ENCODE measurements at regions of chr1 and their contacts with region 1.

Region 1: DNA sequence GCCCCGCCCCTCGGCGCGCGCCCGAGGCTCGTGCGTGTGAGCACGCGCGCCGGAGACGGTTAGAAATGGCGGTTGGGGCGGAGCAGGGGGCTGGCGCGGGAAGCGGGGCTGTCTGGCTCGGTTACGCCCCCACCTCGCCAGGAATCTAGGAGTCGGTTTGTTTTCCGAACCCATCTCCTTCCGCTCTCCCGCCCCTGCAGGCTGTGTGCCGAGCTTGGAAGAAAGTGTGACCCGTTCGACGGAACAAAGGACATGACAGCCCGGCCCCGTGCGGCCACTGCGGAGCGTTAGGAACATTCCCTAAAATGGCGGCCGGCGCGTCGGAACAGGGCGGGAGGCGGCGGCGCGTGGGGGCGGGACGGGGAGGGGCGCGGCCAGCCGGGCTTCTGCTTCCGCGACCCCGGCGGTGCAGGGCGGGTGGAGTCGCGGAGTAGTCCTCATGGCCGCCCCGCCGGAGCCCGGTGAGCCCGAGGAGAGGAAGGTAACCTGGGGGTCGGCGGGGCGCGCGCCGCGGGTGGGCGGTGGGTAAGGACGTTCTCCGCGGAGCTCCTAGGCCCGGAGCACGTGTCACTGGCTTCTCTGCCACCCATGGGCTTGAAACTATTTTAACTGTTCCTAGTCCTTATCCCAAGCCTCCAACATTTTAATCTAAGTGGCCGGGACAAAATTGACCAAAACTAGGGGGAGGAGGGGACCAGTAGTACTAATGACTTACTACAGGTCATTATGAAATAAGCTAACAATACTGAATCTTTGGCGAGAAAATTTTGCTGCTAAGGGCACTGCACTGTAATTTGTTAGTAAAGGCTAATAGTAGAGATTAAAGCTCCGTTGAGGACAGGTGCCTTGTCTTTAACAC is at the start of gene COX20:
- DNase-seq: peak; percentile 84 to 97 (median 93)
- ATAC-seq: peak; percentile 84
- H3K4me3 ChIP-seq: peak within 1 kb of the TSS; percentile 87
- H3K4me3 Mint-ChIP-seq: peak within 1 kb of the TSS; percentile 85 to 100 (median 97)
- H3K27ac ChIP-seq: peak within 1 kb of the TSS; percentile 96
- H3K27ac Mint-ChIP-seq: peak within 1 kb of the TSS; percentile 99 to 100 (median 100)
- H3K4me1 ChIP-seq: peaks cover 17 to 27% of the 10 kb centered on the region in 2 donors
- H3K4me1 Mint-ChIP-seq: peaks cover 34 to 55% (median 48%) of the 10 kb centered on the region in 7 donors
- H3K27me3 ChIP-seq: no peaks in the 10 kb centered on the region
- H3K27me3 Mint-ChIP-seq: no peaks in the 10 kb centered on the region
- total RNA-seq, gene COX20: 23.5 to 31.0 (median 27.8) TPM

Region 2: GRCh38 chr1:244461245-244462071 is 374.0 kb before region 1 on chr1 and contains the start of gene CATSPERE:
- CTCF ChIA-PET with region 1: no interaction called
- POLR2A ChIA-PET with region 1: interaction called, 16 read pairs
- intact Hi-C with region 1: loop called in 1 of 2 experiments (anchors 1 kb)
- DNase-seq: peak; percentile 55 to 79 (median 76)
- ATAC-seq: peak; percentile 99
- H3K4me3 ChIP-seq: peak within 1 kb of the TSS; percentile 77
- H3K4me3 Mint-ChIP-seq: peak within 1 kb of the TSS; percentile 69 to 89 (median 82)
- H3K27ac ChIP-seq: peak within 1 kb of the TSS; percentile 78
- H3K27ac Mint-ChIP-seq: peak within 1 kb of the TSS; percentile 78 to 97 (median 90)
- H3K4me1 ChIP-seq: peaks cover 5 to 6% of the 10 kb centered on the region in 2 donors
- H3K4me1 Mint-ChIP-seq: peaks cover 6 to 16% (median 13%) of the 10 kb centered on the region in 7 donors
- H3K27me3 ChIP-seq: no peaks in the 10 kb centered on the region
- H3K27me3 Mint-ChIP-seq: peaks cover 0 to 2% (median 0%) of the 10 kb centered on the region in 5 donors
- total RNA-seq, gene CATSPERE: 0.77 to 2.2 (median 1.7) TPM

Region 3: GRCh38 chr1:244849189-244849866 is 13.8 kb after region 1 on chr1:
- CTCF ChIA-PET with region 1: interaction called, 10 read pairs
- POLR2A ChIA-PET with region 1: interaction called, 1,419 read pairs
- intact Hi-C with region 1: loop called (anchors 1 kb)
- DNase-seq: no peak
- ATAC-seq: no peak
- H3K4me3 ChIP-seq: no peak overlapping the region
- H3K4me3 Mint-ChIP-seq: peak overlapping the region in 1 of 10 donors; percentile 21
- H3K27ac ChIP-seq: no peak overlapping the region
- H3K27ac Mint-ChIP-seq: peak overlapping the region in 6 of 9 donors; percentile 18 to 64 (median 48)
- H3K4me1 ChIP-seq: peaks cover 16 to 22% of the 10 kb centered on the region in 2 donors
- H3K4me1 Mint-ChIP-seq: peaks cover 33 to 96% (median 71%) of the 10 kb centered on the region in 7 donors
- H3K27me3 ChIP-seq: no peaks in the 10 kb centered on the region
- H3K27me3 Mint-ChIP-seq: no peaks in the 10 kb centered on the region

Region 4: GRCh38 chr1:244864253-244865027 is 28.9 kb after region 1 on chr1 and contains the start of gene HNRNPU:
- CTCF ChIA-PET with region 1: interaction called, 83 read pairs
- POLR2A ChIA-PET with region 1: interaction called, 1,419 read pairs
- intact Hi-C with region 1: loop called (anchors 1 kb)
- DNase-seq: peak; percentile 93 to 99 (median 98)
- ATAC-seq: peak; percentile 81
- H3K4me3 ChIP-seq: peak within 1 kb of the TSS; percentile 78
- H3K4me3 Mint-ChIP-seq: peak within 1 kb of the TSS; percentile 86 to 98 (median 98)
- H3K27ac ChIP-seq: peak within 1 kb of the TSS; percentile 100
- H3K27ac Mint-ChIP-seq: peak within 1 kb of the TSS; percentile 93 to 100 (median 98)
- H3K4me1 ChIP-seq: peaks cover 23 to 25% of the 10 kb centered on the region in 2 donors
- H3K4me1 Mint-ChIP-seq: peaks cover 39 to 56% (median 51%) of the 10 kb centered on the region in 7 donors
- H3K27me3 ChIP-seq: no peaks in the 10 kb centered on the region
- H3K27me3 Mint-ChIP-seq: peaks cover 0 to 3% (median 0%) of the 10 kb centered on the region in 5 donors
- total RNA-seq, gene HNRNPU: 378 to 509 (median 428) TPM

Region 5: DNA sequence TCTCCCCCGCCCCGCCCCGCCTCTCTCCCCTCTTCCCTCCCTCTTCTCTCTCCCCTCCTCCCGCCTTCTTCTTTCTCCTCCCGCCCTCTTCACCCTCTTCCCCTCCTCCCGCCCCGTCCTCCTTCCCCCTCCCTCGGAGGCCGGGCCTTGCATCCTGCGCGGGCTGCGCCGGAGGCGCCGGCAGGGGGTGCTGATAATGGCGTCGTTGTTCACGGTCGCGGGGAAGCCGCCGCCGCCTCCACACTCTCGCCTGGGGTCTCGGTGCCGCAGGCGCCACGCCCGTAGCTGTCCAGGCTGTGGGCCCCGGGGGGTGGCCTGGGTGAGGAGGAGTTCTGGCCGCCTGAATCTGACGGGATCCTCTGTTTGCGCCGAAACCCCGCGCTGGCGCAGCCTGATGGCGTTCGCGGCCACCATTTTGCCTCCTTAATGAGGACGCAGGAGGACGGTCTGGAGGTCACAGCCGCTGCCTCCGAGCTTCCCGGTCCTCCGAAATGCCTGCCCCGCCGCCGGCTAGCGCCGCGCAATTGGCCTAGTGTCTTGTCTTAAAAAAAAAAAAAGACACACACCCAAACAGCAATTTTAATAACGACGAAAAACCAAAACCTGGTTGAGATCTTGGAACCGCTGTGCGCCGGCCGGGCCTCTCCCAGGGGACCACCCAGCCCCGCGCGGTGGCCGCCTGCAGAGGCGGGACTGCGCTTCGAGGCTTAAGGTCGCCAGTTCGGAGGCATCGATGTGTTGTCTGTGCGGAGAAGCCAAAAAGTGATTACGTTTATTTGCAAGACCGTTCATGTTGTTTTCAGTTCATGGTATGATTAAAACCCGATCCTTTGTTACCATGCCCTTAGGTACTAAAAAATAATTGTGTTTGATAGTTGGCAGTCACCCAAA is 135.4 kb after region 1 on chr1:
- CTCF ChIA-PET with region 1: interaction called, 6 read pairs
- POLR2A ChIA-PET with region 1: interaction called, 207 read pairs
- intact Hi-C with region 1: loop called (anchors 1 kb)
- DNase-seq: peak; percentile 91 to 97 (median 95)
- ATAC-seq: peak; percentile 88
- H3K4me3 ChIP-seq: peak overlapping the region; percentile 81
- H3K4me3 Mint-ChIP-seq: peak overlapping the region; percentile 91 to 95 (median 93)
- H3K27ac ChIP-seq: peak overlapping the region; percentile 99
- H3K27ac Mint-ChIP-seq: peak overlapping the region; percentile 97 to 100 (median 99)
- H3K4me1 ChIP-seq: peaks cover 5 to 12% of the 10 kb centered on the region in 2 donors
- H3K4me1 Mint-ChIP-seq: peaks cover 7 to 31% (median 25%) of the 10 kb centered on the region in 7 donors
- H3K27me3 ChIP-seq: no peaks in the 10 kb centered on the region
- H3K27me3 Mint-ChIP-seq: peaks cover 0 to 14% (median 0%) of the 10 kb centered on the region in 5 donors

Region 6: DNA sequence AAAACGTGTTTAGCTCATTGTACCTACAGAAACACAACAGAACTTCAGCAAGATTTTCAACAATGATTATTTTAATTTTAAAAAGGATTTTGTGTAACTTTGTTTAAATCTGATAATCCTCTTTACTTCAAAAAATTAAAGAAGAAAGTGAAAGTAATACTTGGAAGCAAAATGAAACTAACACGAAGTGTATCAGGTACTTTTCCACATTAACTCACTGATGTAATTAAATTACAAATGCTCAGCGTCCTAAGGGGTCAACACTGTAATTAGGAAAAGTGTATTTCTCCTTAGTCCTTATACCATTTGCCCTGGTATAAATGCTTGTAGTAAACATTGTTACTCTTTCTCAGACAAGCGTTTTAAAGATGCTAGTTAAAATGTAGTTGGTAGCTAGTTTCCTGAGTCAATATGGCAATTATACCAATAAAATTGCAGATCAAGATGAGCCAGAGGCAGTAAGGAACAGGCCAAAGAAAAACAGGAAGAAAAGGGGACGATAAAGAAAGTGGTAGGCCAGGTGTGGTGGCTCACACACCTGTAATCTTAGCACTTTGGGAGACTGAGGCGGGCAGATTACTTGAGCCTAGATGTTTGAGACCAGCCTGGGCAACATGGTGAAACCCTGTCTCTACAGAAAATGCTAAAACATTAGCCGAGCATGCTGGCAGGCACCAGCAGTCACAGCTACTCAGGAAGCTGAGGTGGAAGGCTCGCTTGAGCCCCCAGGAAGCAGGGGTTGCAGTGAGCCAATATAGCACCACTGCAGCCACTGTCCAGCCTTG is 1118.6 kb after region 1 on chr1:
- CTCF ChIA-PET with region 1: no interaction called
- POLR2A ChIA-PET with region 1: interaction called, 3 read pairs
- intact Hi-C with region 1: loop called in 1 of 2 experiments (anchors 5 kb)
- DNase-seq: peak in 6 of 9 donors; percentile 17 to 49 (median 34)
- ATAC-seq: peak; percentile 45
- H3K4me3 ChIP-seq: peak overlapping the region; percentile 31
- H3K4me3 Mint-ChIP-seq: peak overlapping the region in 8 of 10 donors; percentile 56 to 90 (median 78)
- H3K27ac ChIP-seq: peak overlapping the region; percentile 76
- H3K27ac Mint-ChIP-seq: peak overlapping the region in 1 of 9 donors; percentile 97
- H3K4me1 ChIP-seq: peaks cover 25 to 27% of the 10 kb centered on the region in 2 donors
- H3K4me1 Mint-ChIP-seq: peaks cover 9 to 29% (median 19%) of the 10 kb centered on the region in 7 donors
- H3K27me3 ChIP-seq: no peaks in the 10 kb centered on the region
- H3K27me3 Mint-ChIP-seq: no peaks in the 10 kb centered on the region

Measured in naive thymus-derived CD4-positive, alpha-beta T cell (primary cell).